ENCODE measurements at regions of chr1 and their contacts with region 1.

Region 1: GRCh38 chr1:153070243-153070642 is 1.2 kb downstream of the SPRR2B start:
- DNase-seq: no peak
- ATAC-seq: no peak
- H3K4me3 ChIP-seq: no peak overlapping the region
- H3K27ac ChIP-seq: no peak overlapping the region
- H3K4me1 ChIP-seq: no peaks in the 10 kb centered on the region
- H3K27me3 ChIP-seq: no peaks in the 10 kb centered on the region
- CTCF ChIP-seq: no peak

Region 2: GRCh38 chr1:153095764-153096163 is 25.5 kb after region 1 on chr1:
- intact Hi-C with region 1: loop called in 2 of 10 experiments (anchors 1 to 2 kb)
- DNase-seq: no peak
- ATAC-seq: no peak
- H3K4me3 ChIP-seq: no peak overlapping the region
- H3K27ac ChIP-seq: no peak overlapping the region
- H3K4me1 ChIP-seq: no peaks in the 10 kb centered on the region
- H3K27me3 ChIP-seq: no peaks in the 10 kb centered on the region
- CTCF ChIP-seq: no peak